Posterior vena cava (tissue), 2 donors: ENCODE measurements at regions of chr17 and their contacts with region 1.

Region 1: GRCh38 chr17:81340607-81341515 is 45.8 kb upstream of the SLC38A10 start:
- DNase-seq: no peak

Region 2: GRCh38 chr17:81294856-81295680 is 45.8 kb before region 1 on chr17 and contains the start of gene SLC38A10:
- intact Hi-C with region 1: loop called in 1 of 2 experiments (anchors 5 kb)
- DNase-seq: peak; percentile 98
- total RNA-seq, gene SLC38A10: 59.6 to 85.1 TPM

Region 3: DNA sequence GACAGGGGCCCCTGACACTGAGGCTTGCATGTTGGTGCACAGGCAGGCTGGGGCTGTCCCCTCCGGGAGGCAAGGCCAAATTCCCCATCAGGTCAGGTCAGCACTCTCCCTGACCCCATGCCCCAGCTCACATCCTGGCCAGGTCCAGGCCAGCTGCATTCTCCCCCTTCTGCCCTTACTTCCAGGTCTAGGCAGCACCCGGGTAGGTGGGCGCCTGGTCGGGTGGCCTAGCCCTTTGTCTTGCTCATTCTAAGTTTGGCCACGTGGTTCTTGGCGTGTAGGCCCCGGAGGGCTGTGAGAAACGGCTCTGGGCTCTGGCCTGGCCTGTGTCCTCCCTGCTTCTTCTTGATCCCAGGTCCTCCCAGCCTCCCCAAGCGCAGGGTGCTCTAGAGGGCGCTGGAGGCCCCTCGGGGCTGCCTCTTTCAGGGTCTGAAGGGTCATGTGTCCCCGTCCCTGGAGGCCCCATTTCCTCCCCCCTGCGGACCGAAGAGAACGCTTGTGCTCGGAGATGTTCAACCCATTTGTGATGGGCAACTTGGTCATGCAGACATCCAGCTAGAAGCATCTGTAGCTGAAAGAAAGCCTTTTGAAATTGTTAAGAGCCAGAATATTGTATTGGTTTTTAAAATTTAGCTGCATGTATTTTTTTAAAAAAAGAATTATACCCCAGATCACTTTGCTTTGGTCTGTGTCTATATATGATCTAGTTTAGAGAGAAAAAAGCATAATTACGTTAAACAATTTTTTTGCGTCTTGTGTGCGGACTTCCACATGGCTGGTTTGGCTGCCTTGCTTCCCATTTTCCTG is 61.1 kb after region 1 on chr17:
- intact Hi-C with region 1: loop called in 1 of 2 experiments (anchors 1 kb)
- DNase-seq: no peak

Region 4: GRCh38 chr17:82297714-82298537 is 957.1 kb after region 1 on chr17:
- intact Hi-C with region 1: loop called in 1 of 2 experiments (anchors 5 kb)
- DNase-seq: peak; percentile 97